ENCODE measurements at regions of chr12 and their contacts with region 1.

Region 1: DNA sequence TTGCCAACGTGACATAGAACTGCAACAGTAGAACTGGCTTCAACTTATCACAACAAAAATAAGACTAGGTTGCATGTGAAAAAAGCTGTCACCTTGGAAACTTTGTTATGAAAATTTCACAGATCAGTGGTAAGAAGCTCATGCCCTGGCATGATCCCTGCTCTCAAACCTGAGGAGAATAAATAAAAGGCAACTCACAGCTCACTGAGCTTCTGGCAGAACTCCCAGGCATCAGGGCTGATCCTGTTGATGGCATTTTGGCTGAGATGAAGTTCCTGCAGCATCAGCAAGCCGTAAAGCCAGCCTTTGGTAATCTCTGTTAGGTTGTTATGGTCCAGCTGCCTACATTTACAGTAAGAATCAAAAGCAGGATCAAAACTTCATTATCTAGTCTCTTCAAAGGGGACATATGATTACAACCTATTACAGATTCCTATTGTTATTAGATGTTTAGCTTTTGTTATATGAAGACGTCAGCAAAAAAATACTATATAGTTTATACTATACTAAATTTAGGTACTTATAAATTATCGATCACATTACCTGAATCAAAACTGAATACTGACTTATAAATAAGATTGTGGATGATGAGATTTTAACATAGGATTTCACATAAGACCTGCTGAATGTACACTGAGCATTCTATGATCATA is 32.0 kb downstream of the LRIG3 start:
- DNase-seq: peak; percentile 26
- H3K4me3 Mint-ChIP-seq: no peak overlapping the region
- H3K27ac Mint-ChIP-seq: peak overlapping the region; percentile 80
- H3K4me1 Mint-ChIP-seq: peaks cover 11% of the 10 kb centered on the region
- H3K27me3 Mint-ChIP-seq: no peaks in the 10 kb centered on the region
- CTCF ChIP-seq: no peak

Region 2: DNA sequence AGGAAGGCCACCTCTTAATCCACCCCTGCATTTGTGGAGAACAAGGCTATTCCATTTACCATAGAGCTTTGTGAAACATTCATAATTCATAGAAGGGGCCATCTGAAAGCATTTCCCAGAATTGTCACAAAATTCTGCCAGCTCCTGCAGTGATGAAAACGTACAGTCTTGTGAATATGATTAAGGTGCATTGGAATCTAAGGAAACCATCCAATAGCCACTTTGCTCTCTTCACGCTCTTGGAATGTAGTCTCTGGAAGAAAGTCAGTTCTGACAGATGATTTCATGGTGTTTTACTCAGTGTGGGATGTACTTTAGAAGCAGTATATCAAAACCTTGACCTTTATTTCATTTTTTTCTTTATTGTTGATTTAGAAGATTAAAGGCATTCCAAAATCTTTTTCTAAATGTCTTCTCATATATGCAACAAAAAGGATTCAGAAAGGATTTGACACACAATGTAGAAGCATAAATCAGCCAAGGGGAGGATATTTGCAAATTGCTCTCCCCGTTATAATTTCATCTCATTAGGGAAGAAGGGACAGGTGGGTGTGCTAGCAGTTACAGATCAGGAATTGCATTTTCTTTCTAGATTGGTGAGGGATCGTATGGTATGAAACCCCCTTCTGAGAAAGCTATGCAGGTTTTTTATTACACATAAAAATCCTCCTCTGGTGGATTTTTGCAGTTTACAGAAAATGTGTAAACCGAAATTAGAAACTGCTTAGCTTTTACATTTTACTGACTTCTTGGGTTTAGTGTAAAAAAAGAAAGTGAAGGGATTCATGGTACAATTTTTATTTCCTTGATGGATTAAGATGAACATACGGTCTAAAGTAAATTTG is 358.1 kb before region 1 on chr12:
- CTCF ChIA-PET with region 1: no interaction called
- POLR2A ChIA-PET with region 1: no interaction called
- intact Hi-C with region 1: no loop called
- DNase-seq: peak; percentile 68
- H3K4me3 Mint-ChIP-seq: peak overlapping the region; percentile 29
- H3K27ac Mint-ChIP-seq: peak overlapping the region; percentile 60
- H3K4me1 Mint-ChIP-seq: peaks cover 35% of the 10 kb centered on the region
- H3K27me3 Mint-ChIP-seq: no peaks in the 10 kb centered on the region
- CTCF ChIP-seq: no peak

Region 3: GRCh38 chr12:58871556-58871955 is 16.7 kb before region 1 on chr12:
- CTCF ChIA-PET with region 1: interaction called, 3 read pairs
- POLR2A ChIA-PET with region 1: interaction called, 52 read pairs
- intact Hi-C with region 1: no loop called
- DNase-seq: no peak
- H3K4me3 Mint-ChIP-seq: no peak overlapping the region
- H3K27ac Mint-ChIP-seq: no peak overlapping the region
- H3K4me1 Mint-ChIP-seq: peaks cover 5% of the 10 kb centered on the region
- H3K27me3 Mint-ChIP-seq: no peaks in the 10 kb centered on the region
- CTCF ChIP-seq: no peak

Region 4: DNA sequence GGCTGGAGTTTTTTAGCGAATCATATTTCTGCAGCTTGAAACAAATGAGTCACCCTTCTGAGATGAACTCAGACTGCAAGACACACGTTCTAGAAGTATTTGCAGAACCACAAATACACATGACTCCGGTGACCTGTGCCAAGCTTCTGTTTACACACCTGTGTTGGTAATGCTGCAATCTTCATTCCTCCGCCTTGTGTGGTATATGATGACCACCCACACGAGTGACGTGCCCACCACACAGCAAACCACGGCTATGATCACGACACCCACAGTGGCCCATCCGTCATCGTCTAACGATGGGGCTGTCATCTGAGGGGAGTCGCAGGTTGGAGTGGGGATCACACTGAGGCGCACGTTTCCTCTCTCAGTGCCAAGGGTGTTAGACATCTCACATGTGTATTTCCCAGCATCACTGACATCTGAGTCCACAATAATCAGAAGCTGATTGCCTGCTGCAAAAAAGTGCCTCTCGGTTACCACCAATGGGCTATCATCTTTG is 11.0 kb before region 1 on chr12:
- CTCF ChIA-PET with region 1: interaction called, 6 read pairs
- POLR2A ChIA-PET with region 1: interaction called, 52 read pairs
- intact Hi-C with region 1: no loop called
- DNase-seq: peak; percentile 94
- H3K4me3 Mint-ChIP-seq: no peak overlapping the region
- H3K27ac Mint-ChIP-seq: peak overlapping the region; percentile 51
- H3K4me1 Mint-ChIP-seq: peaks cover 17% of the 10 kb centered on the region
- H3K27me3 Mint-ChIP-seq: no peaks in the 10 kb centered on the region
- CTCF ChIP-seq: no peak

Region 5: DNA sequence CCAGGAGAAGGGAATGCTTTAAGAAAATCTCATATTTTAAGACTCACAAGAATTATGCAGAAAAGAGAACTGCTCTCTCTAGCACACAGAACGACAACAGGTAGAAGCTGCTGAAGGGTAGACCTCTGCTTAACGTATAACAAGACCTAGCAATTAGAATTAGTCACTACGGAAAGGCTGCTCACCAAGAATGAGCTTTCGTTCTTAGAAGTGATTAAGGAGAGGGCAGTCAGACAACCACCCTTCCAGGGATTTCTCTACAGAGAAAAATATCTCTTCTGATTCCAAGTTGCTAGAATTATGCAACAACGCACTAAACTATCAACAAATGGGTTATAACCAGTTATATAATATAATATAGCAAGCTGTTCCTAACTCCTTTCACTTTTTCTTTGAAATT is 13.4 kb after region 1 on chr12:
- CTCF ChIA-PET with region 1: interaction called, 3 read pairs
- POLR2A ChIA-PET with region 1: interaction called, 32 read pairs
- intact Hi-C with region 1: no loop called
- DNase-seq: no peak
- H3K4me3 Mint-ChIP-seq: no peak overlapping the region
- H3K27ac Mint-ChIP-seq: no peak overlapping the region
- H3K4me1 Mint-ChIP-seq: peaks cover 4% of the 10 kb centered on the region
- H3K27me3 Mint-ChIP-seq: no peaks in the 10 kb centered on the region
- CTCF ChIP-seq: no peak

Region 6: DNA sequence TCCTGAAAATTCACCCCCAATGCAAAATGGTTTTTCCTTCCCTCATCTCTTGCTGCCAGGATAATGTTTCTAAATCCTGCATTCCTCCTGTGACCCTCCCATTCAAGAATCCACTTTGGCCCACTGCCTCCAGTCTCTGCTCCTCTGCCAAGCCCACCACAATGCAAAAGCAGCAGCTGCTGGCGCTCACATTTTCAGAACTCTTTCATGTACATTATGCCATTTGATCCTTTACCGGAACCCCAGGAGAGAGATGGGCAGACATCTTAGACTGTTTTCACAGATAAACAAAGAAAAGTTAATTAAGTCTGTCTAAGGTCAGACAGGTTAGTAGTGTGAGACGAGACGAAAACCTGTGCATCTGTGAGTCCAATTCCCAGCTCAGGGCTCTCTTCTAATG is 19.1 kb after region 1 on chr12:
- CTCF ChIA-PET with region 1: interaction called, 3 read pairs
- POLR2A ChIA-PET with region 1: interaction called, 76 read pairs
- intact Hi-C with region 1: no loop called
- DNase-seq: no peak
- H3K4me3 Mint-ChIP-seq: no peak overlapping the region
- H3K27ac Mint-ChIP-seq: peak overlapping the region; percentile 99
- H3K4me1 Mint-ChIP-seq: peaks cover 39% of the 10 kb centered on the region
- H3K27me3 Mint-ChIP-seq: no peaks in the 10 kb centered on the region
- CTCF ChIP-seq: no peak

Region 7: GRCh38 chr12:59046763-59047534 is 158.7 kb after region 1 on chr12:
- CTCF ChIA-PET with region 1: interaction called, 3 read pairs
- POLR2A ChIA-PET with region 1: interaction called, 37 read pairs
- intact Hi-C with region 1: no loop called
- DNase-seq: peak; percentile 78
- H3K4me3 Mint-ChIP-seq: no peak overlapping the region
- H3K27ac Mint-ChIP-seq: peak overlapping the region; percentile 63
- H3K4me1 Mint-ChIP-seq: peaks cover 21% of the 10 kb centered on the region
- H3K27me3 Mint-ChIP-seq: no peaks in the 10 kb centered on the region
- CTCF ChIP-seq: no peak

Region 8: GRCh38 chr12:59077575-59078426 is 189.5 kb after region 1 on chr12:
- CTCF ChIA-PET with region 1: interaction called, 5 read pairs
- POLR2A ChIA-PET with region 1: interaction called, 35 read pairs
- intact Hi-C with region 1: no loop called
- DNase-seq: peak; percentile 49
- H3K4me3 Mint-ChIP-seq: no peak overlapping the region
- H3K27ac Mint-ChIP-seq: peak overlapping the region; percentile 86
- H3K4me1 Mint-ChIP-seq: peaks cover 43% of the 10 kb centered on the region
- H3K27me3 Mint-ChIP-seq: no peaks in the 10 kb centered on the region
- CTCF ChIP-seq: no peak